GM10248 (cell line): ENCODE measurements at regions of chr1 and their contacts with region 1.

Region 1: DNA sequence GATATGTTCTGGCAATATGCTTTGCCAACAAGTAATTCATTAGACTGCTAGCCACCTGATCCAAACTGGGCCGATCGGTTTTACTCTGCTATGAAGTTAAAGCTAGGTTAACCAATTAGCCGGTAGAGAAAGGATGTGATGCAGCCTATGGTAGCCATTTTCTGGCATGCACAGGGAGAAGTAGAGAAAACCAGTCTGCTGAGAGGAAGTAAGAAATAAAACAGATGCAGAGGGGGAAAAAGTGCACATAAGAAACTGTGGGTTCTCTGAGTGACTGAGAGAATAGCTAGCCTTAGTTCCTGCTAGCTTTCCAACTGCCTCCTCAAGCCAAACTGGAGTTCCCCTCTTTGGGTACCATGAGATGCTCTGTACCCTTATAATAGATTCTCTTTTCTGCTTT is 52.8 kb downstream of the ARID4B start:
- DNase-seq: peak; percentile 62
- CTCF ChIP-seq: no peak

Region 2: GRCh38 chr1:235287208-235287882 is 12.1 kb after region 1 on chr1:
- CTCF ChIA-PET with region 1: interaction called, 10 read pairs
- POLR2A ChIA-PET with region 1: no interaction called
- DNase-seq: no peak
- CTCF ChIP-seq: no peak

Region 3: GRCh38 chr1:235791532-235792060 is 516.4 kb after region 1 on chr1:
- CTCF ChIA-PET with region 1: no interaction called
- POLR2A ChIA-PET with region 1: no interaction called
- DNase-seq: no peak
- CTCF ChIP-seq: no peak